CD14-positive monocyte (primary cell): ENCODE measurements at regions of chr10 and their contacts with region 1.

Region 1: GRCh38 chr10:92689663-92690210 is at the start of gene HHEX:
- DNase-seq: peak; percentile 64 to 75 (median 67)
- H3K4me3 ChIP-seq: peak within 1 kb of the TSS; percentile 82 to 92 (median 86)
- H3K4me3 Mint-ChIP-seq: peak within 1 kb of the TSS; percentile 97 to 100
- H3K27ac ChIP-seq: peak within 1 kb of the TSS; percentile 79 to 93
- H3K27ac Mint-ChIP-seq: peak within 1 kb of the TSS; percentile 95 to 98 (median 96)
- H3K4me1 ChIP-seq: peaks cover 28 to 50% of the 10 kb centered on the region in 2 donors
- H3K4me1 Mint-ChIP-seq: peaks cover 69% of the 10 kb centered on the region
- H3K27me3 ChIP-seq: no peaks in the 10 kb centered on the region
- H3K27me3 Mint-ChIP-seq: no peaks in the 10 kb centered on the region
- CTCF ChIP-seq: no peak
- polyA plus RNA-seq, gene HHEX: 33.6 to 54.6 (median 51.2) TPM

Region 2: GRCh38 chr10:92592761-92593618 is 96.7 kb before region 1 on chr10 and contains the start of gene KIF11:
- intact Hi-C with region 1: loop called (anchors 5 to 10 kb)
- DNase-seq: peak; percentile 89 to 97 (median 91)
- H3K4me3 ChIP-seq: peak within 1 kb of the TSS; percentile 63 to 99 (median 72)
- H3K4me3 Mint-ChIP-seq: peak within 1 kb of the TSS; percentile 91 to 95
- H3K27ac ChIP-seq: peak within 1 kb of the TSS; percentile 93 to 97
- H3K27ac Mint-ChIP-seq: peak within 1 kb of the TSS; percentile 94 to 99 (median 97)
- H3K4me1 ChIP-seq: peaks cover 40 to 46% of the 10 kb centered on the region in 2 donors
- H3K4me1 Mint-ChIP-seq: peaks cover 52% of the 10 kb centered on the region
- H3K27me3 ChIP-seq: no peaks in the 10 kb centered on the region
- H3K27me3 Mint-ChIP-seq: peaks cover 0 to 3% (median 1%) of the 10 kb centered on the region in 3 donors
- CTCF ChIP-seq: no peak
- polyA plus RNA-seq, gene KIF11: 0.07 to 0.55 (median 0.40) TPM

Region 3: DNA sequence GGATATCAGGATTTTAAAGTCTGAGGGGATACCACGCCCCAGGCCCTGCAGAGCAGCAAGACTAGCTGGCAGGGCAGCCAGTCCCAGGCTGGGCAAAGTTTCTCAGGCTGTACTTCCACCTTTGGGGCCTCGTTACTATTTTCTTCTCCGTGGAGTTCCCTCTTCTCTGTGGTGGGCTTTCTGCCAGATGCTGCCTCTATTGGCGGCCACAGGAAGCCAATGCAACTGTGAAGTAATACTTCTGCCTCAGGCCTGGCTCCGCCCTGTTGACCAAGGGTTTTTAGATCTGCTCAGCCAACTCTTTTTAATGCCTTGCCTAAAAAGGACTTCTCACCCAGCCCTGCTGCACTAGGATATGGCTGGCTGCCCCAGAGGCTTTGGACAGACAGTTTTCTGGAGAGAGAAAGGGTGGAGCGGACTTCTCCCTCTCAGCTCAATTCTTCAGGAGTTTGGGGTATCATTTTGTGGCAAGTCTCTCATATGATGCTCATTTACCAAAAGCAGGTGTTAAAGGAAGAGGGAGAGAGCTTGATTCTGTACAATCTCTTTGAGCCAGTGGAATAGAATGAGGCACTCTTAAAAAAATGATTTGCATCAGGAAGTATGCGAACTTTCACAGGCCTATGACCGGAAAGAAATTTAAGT is 67.5 kb after region 1 on chr10:
- intact Hi-C with region 1: loop called (anchors 2 to 10 kb)
- DNase-seq: peak; percentile 84 to 95 (median 90)
- H3K4me3 ChIP-seq: peak overlapping the region in 1 of 3 experiments; percentile 65
- H3K4me3 Mint-ChIP-seq: peak overlapping the region; percentile 72 to 90
- H3K27ac ChIP-seq: peak overlapping the region; percentile 58 to 82
- H3K27ac Mint-ChIP-seq: peak overlapping the region; percentile 82 to 98 (median 95)
- H3K4me1 ChIP-seq: peaks cover 86 to 90% of the 10 kb centered on the region in 2 donors
- H3K4me1 Mint-ChIP-seq: peaks cover 86% of the 10 kb centered on the region
- H3K27me3 ChIP-seq: no peaks in the 10 kb centered on the region
- H3K27me3 Mint-ChIP-seq: peaks cover 0 to 3% (median 0%) of the 10 kb centered on the region in 3 donors
- CTCF ChIP-seq: no peak

Region 4: DNA sequence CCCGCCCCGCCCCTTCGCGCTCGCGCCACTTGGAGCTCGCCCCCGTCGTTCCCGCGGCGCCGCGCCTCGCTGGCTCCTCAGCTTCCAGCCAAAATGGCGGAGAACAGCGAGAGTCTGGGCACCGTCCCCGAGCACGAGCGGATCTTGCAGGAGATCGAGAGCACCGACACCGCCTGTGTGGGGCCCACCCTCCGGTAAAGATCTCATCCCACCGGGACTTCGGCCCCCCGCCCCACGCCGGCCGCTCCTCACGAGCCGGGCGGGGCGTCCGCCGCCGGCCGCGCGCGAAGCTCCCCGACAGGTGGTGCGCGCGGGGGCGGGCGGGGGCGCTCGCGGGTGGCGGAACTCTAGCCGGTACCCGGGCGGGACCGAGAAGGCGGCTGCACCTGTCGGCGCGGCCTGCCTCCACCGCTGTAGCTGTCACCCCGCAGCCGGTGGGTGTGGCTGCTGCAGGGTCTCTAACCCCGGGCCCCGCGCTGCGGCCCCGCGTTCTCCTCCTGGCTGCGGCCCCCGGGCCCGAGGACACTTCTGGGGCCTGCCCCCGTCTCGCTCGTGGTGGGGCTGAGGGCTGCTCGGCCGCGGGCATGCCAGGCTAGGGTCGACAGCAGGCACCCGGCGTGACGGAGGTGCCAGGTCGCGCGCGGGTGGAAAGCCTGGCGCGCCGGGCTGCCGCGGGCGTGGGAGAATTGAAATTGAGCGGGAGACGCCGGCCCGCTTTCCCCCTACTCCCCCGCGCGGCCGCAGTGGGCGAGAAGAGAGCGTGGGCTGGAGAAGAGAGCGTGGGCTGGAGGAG is 158.9 kb after region 1 on chr10 and contains the start of gene EXOC6:
- intact Hi-C with region 1: loop called (anchors 5 kb)
- DNase-seq: peak; percentile 67 to 79 (median 77)
- H3K4me3 ChIP-seq: peak within 1 kb of the TSS; percentile 67 to 95 (median 72)
- H3K4me3 Mint-ChIP-seq: peak within 1 kb of the TSS; percentile 92 to 93
- H3K27ac ChIP-seq: peak within 1 kb of the TSS; percentile 53 to 86
- H3K27ac Mint-ChIP-seq: peak within 1 kb of the TSS; percentile 80 to 95 (median 91)
- H3K4me1 ChIP-seq: peaks cover 52 to 58% of the 10 kb centered on the region in 2 donors
- H3K4me1 Mint-ChIP-seq: peaks cover 52% of the 10 kb centered on the region
- H3K27me3 ChIP-seq: no peaks in the 10 kb centered on the region
- H3K27me3 Mint-ChIP-seq: no peaks in the 10 kb centered on the region
- CTCF ChIP-seq: peak; percentile 33
- polyA plus RNA-seq, gene EXOC6: 7.5 to 9.6 (median 8.3) TPM

Region 5: GRCh38 chr10:93515071-93516005 is 825.6 kb after region 1 on chr10:
- intact Hi-C with region 1: loop called in 1 of 2 experiments (anchors 10 kb)
- DNase-seq: peak; percentile 56 to 75 (median 63)
- H3K4me3 ChIP-seq: peak overlapping the region in 2 of 3 experiments; percentile 9 to 62
- H3K4me3 Mint-ChIP-seq: peak overlapping the region in 1 of 2 donors; percentile 76
- H3K27ac ChIP-seq: peak overlapping the region; percentile 68 to 87
- H3K27ac Mint-ChIP-seq: peak overlapping the region; percentile 82 to 98 (median 91)
- H3K4me1 ChIP-seq: peaks cover 43 to 54% of the 10 kb centered on the region in 2 donors
- H3K4me1 Mint-ChIP-seq: peaks cover 38% of the 10 kb centered on the region
- H3K27me3 ChIP-seq: no peaks in the 10 kb centered on the region
- H3K27me3 Mint-ChIP-seq: no peaks in the 10 kb centered on the region
- CTCF ChIP-seq: no peak